MCF 10A (cell line): ENCODE measurements at regions of chr10 and their contacts with region 1.

Region 1: DNA sequence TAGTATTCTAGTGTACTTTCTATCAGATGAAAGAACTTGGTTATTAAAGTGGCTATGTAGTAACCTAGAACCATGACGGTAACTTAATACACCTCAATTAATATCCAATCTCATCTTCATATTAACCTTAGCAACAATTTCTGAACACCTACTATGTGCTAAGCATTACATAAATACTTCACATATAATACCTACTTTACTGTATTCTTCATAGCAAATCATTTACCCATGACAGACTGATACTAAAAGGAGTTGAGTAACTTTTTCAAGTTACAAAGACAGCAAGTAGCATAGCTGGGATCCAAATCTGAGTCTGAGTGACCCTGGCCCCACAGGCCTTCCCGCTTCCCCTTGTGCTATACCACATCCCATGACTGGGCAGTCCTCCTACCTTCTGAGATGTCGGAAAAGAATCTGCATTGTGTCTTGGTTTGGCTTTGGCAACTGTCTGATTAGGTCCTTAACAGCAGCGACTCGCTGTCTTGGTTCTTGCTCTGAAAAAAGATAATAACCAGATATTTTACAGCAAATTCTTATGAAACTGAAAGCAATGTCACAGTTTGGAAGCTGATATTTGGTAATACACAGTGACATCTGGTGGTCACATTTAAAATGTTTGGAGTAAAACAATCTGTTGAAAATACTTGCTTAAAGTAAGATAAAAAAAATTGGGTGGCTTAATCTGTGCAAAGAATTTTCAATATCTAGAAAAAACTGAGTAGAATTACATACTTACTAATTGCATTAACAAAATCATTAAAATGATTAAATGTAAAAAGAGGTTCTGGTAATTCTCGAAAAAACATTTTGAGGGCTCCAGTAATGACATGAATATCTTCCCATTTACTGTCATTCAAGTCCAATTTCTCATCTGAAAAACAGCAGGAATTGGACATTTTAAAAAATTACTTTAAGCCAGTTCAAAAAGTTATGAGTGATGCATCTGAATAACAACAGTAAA is 120.1 kb downstream of the ARHGAP12 start:
- DNase-seq: peak; percentile 56
- H3K4me3 Mint-ChIP-seq: peak overlapping the region; percentile 16
- H3K27ac Mint-ChIP-seq: peak overlapping the region; percentile 54
- H3K4me1 Mint-ChIP-seq: peaks cover 6% of the 10 kb centered on the region
- H3K27me3 Mint-ChIP-seq: no peaks in the 10 kb centered on the region
- CTCF ChIP-seq: peak; percentile 46

Region 2: DNA sequence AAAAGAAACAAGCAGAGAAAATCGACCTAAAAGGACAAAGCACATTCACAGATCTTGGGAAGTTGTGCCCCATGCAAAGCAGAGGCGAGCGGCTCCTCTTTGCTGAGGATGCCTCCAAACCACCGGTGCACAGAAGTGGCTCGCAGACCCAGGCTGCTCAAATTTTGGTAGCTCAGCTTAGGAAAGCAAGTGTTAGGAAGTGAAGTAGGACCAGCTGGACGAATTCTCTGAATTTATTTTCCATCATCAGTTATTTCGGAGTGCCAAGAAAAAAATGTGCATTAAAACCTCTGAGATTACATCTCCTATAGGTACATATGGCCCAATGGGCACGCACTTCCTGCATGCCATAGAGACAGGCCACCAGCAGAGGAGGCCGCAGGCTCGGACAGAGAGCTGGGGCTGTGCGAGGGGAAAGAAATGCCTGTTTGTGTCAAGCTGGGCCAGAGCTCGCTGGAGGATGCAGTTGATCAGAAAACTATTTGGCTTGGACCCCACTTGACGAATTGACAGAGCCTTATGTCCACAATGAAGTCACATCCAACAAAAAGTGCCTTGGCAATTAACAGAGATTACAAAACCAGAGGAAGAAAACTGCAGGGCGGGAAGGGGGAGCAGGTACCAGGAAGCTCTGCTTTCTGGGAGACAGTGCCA is 1056.7 kb before region 1 on chr10:
- CTCF ChIA-PET with region 1: interaction called, 3 read pairs
- POLR2A ChIA-PET with region 1: no interaction called
- intact Hi-C with region 1: loop called (anchors 1 kb)
- DNase-seq: peak; percentile 56
- H3K4me3 Mint-ChIP-seq: no peak overlapping the region
- H3K27ac Mint-ChIP-seq: no peak overlapping the region
- H3K4me1 Mint-ChIP-seq: no peaks in the 10 kb centered on the region
- H3K27me3 Mint-ChIP-seq: no peaks in the 10 kb centered on the region
- CTCF ChIP-seq: peak; percentile 77

Region 3: DNA sequence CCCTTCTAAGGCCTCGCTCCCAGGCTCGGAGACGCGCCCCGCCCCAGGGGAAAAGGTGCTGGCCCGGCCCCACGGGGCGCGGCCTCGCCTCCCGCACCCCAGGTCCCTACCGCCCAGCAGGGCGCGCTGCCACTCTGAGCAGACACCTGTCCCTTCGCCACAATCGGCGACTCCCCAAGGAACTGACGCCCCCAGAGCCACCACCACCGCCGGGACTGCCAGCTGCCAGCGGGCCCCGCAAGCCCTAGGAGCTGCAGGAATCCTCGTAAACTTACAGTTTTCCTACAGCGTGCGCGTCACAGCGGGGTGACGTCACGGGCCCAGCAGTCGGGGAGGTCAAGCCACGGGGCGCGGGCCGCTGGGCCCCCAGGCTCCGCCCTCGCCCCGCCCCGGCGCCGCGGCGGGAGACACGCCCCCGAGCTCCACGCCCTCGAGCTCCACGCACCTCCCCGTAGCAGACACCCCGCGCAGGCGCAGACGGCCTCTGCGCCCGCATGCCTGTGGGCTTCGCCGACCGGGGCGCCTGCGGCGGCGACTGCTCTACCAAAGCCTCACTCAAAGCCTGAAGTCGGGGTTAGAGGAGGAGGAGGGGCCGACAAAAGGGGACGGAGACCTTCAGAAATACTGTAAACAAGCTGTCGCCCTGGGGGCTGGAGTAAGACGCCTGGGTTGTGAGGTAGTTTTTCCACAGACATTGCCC is 776.8 kb before region 1 on chr10 and contains the start of gene ZNF438:
- CTCF ChIA-PET with region 1: no interaction called
- POLR2A ChIA-PET with region 1: no interaction called
- intact Hi-C with region 1: loop called (anchors 2 kb)
- DNase-seq: peak; percentile 90
- H3K4me3 Mint-ChIP-seq: peak within 1 kb of the TSS; percentile 78
- H3K27ac Mint-ChIP-seq: peak within 1 kb of the TSS; percentile 99
- H3K4me1 Mint-ChIP-seq: peaks cover 34% of the 10 kb centered on the region
- H3K27me3 Mint-ChIP-seq: no peaks in the 10 kb centered on the region
- CTCF ChIP-seq: peak; percentile 59
- total RNA-seq, gene ZNF438: 6.8 and 8.4 TPM in 2 replicates

Region 4: DNA sequence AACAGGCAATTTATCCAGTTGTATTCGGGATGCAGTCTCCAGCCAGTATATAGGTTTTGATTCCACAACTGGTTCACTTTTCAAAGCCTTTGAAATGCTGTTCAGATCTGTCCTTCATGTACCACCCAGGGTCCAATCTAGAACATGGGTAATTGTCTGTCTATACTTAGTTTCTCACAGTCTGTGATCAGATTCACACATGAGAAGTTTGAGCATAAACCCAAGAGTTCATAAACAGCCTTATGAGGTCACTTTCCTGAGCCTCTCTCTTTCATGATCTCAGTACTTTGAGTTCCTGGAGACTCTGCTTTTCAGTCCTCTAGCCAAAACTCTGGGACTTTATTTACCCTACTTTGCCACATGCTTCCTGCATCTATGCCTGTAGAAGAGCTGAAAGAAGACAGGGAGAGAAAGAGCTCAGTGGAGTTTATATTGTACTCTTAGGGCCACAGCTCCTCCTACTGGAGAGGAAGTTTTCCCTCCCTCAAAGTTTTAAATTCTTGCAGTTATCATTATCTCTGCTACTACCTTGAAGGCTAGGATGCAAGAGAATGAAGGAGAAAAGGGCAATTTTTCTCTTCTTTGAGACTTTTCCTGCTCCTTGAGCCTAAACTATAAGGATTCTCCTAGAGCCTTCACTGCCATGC is 317.6 kb before region 1 on chr10:
- CTCF ChIA-PET with region 1: no interaction called
- POLR2A ChIA-PET with region 1: no interaction called
- intact Hi-C with region 1: loop called (anchors 10 kb)
- DNase-seq: peak; percentile 57
- H3K4me3 Mint-ChIP-seq: no peak overlapping the region
- H3K27ac Mint-ChIP-seq: no peak overlapping the region
- H3K4me1 Mint-ChIP-seq: peaks cover 7% of the 10 kb centered on the region
- H3K27me3 Mint-ChIP-seq: no peaks in the 10 kb centered on the region
- CTCF ChIP-seq: peak; percentile 58

Region 5: DNA sequence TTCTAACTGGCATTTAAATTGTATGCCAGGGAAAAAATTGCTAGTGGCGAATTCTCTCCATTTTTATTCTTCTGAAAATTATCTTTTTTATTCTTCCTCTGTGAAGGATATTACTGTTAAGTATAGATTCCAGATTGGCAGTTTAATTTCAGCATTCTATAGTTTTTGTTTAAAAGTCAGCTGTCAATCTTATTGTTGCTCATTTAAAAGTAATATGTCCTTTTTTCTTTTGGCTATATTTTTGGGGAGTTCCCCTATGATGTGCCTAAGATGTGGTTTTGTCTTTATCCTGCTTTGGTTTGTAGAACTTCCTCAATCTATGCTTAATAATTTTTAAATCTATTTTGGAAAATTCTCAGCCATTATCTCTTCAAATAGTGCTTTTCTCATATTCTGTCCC is 15.8 kb before region 1 on chr10:
- CTCF ChIA-PET with region 1: no interaction called
- POLR2A ChIA-PET with region 1: no interaction called
- intact Hi-C with region 1: no loop called
- DNase-seq: no peak
- H3K4me3 Mint-ChIP-seq: no peak overlapping the region
- H3K27ac Mint-ChIP-seq: no peak overlapping the region
- H3K4me1 Mint-ChIP-seq: no peaks in the 10 kb centered on the region
- H3K27me3 Mint-ChIP-seq: no peaks in the 10 kb centered on the region
- CTCF ChIP-seq: no peak

Region 6: DNA sequence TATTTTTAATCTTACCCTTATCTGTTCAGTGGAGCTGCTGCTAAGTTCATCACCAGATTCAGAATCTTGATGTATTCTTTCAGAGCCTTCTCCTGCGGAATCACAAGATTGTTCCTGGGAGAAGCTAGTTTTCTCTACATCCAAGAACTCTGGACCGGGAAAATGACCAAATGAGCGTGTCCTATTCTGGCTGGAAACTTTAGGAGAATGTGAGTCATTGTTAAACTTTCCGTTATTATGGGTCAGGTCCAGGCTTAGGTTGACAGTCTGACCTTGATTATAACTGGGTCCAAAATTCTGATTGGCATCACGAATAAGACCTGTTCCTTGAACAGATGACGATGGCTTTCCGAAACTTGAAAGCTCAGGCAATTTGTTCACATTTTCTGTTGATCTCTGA is 99.6 kb after region 1 on chr10:
- CTCF ChIA-PET with region 1: no interaction called
- POLR2A ChIA-PET with region 1: no interaction called
- intact Hi-C with region 1: no loop called
- DNase-seq: no peak
- H3K4me3 Mint-ChIP-seq: no peak overlapping the region
- H3K27ac Mint-ChIP-seq: no peak overlapping the region
- H3K4me1 Mint-ChIP-seq: peaks cover 33% of the 10 kb centered on the region
- H3K27me3 Mint-ChIP-seq: no peaks in the 10 kb centered on the region
- CTCF ChIP-seq: no peak